B cell (primary cell): ENCODE measurements at regions of chr2 and their contacts with region 1.

Region 1: GRCh38 chr2:226791487-226792081 is 8.0 kb downstream of the IRS1 start:
- DNase-seq: peak; percentile 95
- ATAC-seq: peak; percentile 98
- H3K4me3 ChIP-seq: peak overlapping the region; percentile 51 to 85 (median 75)
- H3K4me3 Mint-ChIP-seq: peak overlapping the region; percentile 97
- H3K27ac ChIP-seq: peak overlapping the region; percentile 92
- H3K27ac Mint-ChIP-seq: peak overlapping the region; percentile 99
- H3K4me1 ChIP-seq: peaks cover 12 to 18% of the 10 kb centered on the region in 2 donors
- H3K4me1 Mint-ChIP-seq: peaks cover 36% of the 10 kb centered on the region
- H3K27me3 ChIP-seq: no peaks in the 10 kb centered on the region
- H3K27me3 Mint-ChIP-seq: no peaks in the 10 kb centered on the region
- CTCF ChIP-seq: peak; percentile 67

Region 2: DNA sequence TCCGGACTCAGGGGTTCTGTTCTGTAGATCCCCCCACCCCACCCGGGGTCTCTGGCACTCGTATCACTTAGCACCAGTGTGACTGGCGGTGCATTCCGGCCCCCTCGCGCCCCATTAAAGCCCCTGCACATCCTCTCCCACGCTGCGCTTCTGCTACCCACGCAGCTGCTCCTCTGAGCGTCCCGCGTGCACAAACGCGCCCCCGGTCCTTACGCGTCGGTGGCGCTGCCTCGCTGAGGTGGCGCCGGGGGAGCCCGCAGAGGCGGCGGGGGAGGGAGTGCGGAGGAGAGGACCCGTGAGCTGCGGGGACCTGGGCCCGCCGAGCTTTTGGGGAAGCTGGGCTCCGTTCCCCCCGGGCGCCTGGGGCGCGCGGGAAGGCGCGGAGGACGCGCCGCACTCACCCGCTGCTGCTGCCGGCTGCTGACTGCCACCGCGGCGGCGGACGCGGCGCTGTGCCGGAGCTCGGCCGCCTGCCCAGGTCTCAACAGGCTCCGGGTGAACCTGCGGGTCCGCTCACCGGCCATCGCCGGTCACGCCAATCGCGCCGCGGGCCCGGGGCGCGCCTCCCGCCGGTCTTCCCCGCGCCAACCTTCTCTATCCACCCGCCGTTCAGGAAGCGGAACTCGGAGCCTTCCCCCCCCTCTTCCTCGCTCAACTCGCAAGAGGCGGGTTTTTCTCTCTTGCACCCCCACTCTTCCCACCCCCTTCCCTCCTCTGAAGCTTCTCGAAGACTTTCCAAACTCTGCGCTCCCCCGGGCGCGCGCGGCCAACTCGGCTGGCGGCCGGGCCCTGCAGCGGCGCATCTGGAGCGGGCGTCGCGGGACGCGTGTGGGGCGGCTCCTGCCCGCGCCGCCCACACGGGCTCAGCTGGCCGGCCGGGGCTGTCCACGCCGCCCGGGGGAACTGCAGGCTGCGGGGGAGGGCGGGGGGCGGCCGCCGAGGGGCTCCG is 1749.5 kb before region 1 on chr2 and contains the start of gene DOCK10:
- CTCF ChIA-PET with region 1: no interaction called
- POLR2A ChIA-PET with region 1: no interaction called
- intact Hi-C with region 1: loop called (anchors 5 kb)
- DNase-seq: peak; percentile 83
- ATAC-seq: peak; percentile 44
- H3K4me3 ChIP-seq: peak within 1 kb of the TSS; percentile 58 to 95 (median 81)
- H3K4me3 Mint-ChIP-seq: peak within 1 kb of the TSS; percentile 95
- H3K27ac ChIP-seq: peak within 1 kb of the TSS; percentile 87 to 91
- H3K27ac Mint-ChIP-seq: peak within 1 kb of the TSS; percentile 97
- H3K4me1 ChIP-seq: peaks cover 26 to 29% of the 10 kb centered on the region in 2 donors
- H3K4me1 Mint-ChIP-seq: peaks cover 48% of the 10 kb centered on the region
- H3K27me3 ChIP-seq: peaks cover 0 to 5% (median 1%) of the 10 kb centered on the region in 4 experiments
- H3K27me3 Mint-ChIP-seq: peaks cover 8% of the 10 kb centered on the region
- CTCF ChIP-seq: no peak
- total RNA-seq, gene DOCK10: 139 and 140 TPM in 2 replicates

Region 3: DNA sequence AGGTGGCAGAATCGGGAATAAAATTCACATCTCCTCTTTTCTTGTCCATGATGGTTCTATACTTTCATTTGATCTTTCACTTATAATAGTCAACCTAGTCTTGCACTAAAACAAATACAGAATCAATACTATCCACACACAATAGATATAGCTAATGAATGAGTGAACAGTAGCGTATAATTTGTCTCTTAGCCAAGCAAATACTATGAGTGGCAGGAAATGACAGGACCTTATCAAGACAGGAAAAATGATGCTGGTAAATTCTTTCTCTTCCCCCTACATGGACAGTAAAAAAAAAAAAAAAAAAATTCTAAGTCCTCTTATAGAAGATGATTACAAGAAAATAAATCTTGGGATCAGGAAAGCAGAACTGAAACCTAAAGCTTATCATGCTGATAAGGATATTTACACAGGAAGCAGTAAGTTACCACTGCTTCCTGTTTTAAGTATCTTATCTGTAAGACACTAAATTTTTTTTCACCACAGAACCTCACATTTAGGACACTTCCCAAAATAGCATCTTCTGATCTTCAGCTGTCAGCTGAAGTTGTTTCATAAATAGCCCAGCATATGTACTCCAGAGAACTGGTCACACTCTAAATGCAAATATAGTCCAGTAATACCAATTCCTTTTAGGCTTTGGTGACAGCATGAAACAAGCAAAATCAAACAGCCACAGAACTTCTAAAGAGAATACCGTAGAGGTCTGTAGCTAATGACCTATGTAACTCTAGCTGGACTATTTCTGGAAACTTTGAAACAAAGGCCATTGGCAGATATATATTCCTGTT is 19.0 kb before region 1 on chr2:
- CTCF ChIA-PET with region 1: interaction called, 6 read pairs
- POLR2A ChIA-PET with region 1: interaction called, 3 read pairs
- intact Hi-C with region 1: loop called (anchors 1 kb)
- DNase-seq: peak; percentile 78
- ATAC-seq: peak; percentile 82
- H3K4me3 ChIP-seq: peak overlapping the region in 1 of 5 experiments; percentile 16
- H3K4me3 Mint-ChIP-seq: peak overlapping the region; percentile 64
- H3K27ac ChIP-seq: peak overlapping the region; percentile 4 to 53
- H3K27ac Mint-ChIP-seq: peak overlapping the region; percentile 71
- H3K4me1 ChIP-seq: peaks cover 26 to 31% of the 10 kb centered on the region in 2 donors
- H3K4me1 Mint-ChIP-seq: peaks cover 50% of the 10 kb centered on the region
- H3K27me3 ChIP-seq: no peaks in the 10 kb centered on the region
- H3K27me3 Mint-ChIP-seq: no peaks in the 10 kb centered on the region
- CTCF ChIP-seq: no peak

Region 4: GRCh38 chr2:226943862-226944620 is 152.5 kb after region 1 on chr2:
- CTCF ChIA-PET with region 1: no interaction called
- POLR2A ChIA-PET with region 1: no interaction called
- intact Hi-C with region 1: no loop called
- DNase-seq: peak; percentile 31
- ATAC-seq: peak; percentile 47
- H3K4me3 ChIP-seq: no peak overlapping the region
- H3K4me3 Mint-ChIP-seq: no peak overlapping the region
- H3K27ac ChIP-seq: peak overlapping the region; percentile 2 to 67
- H3K27ac Mint-ChIP-seq: peak overlapping the region; percentile 83
- H3K4me1 ChIP-seq: peaks cover 11 to 12% of the 10 kb centered on the region in 2 donors
- H3K4me1 Mint-ChIP-seq: peaks cover 17% of the 10 kb centered on the region
- H3K27me3 ChIP-seq: no peaks in the 10 kb centered on the region
- H3K27me3 Mint-ChIP-seq: no peaks in the 10 kb centered on the region
- CTCF ChIP-seq: no peak

Region 5: GRCh38 chr2:226984750-226985582 is 193.4 kb after region 1 on chr2:
- CTCF ChIA-PET with region 1: interaction called, 5 read pairs
- POLR2A ChIA-PET with region 1: no interaction called
- intact Hi-C with region 1: loop called (anchors 1 kb)
- DNase-seq: peak; percentile 72
- ATAC-seq: peak; percentile 88
- H3K4me3 ChIP-seq: no peak overlapping the region
- H3K4me3 Mint-ChIP-seq: no peak overlapping the region
- H3K27ac ChIP-seq: peak overlapping the region; percentile 50 to 80
- H3K27ac Mint-ChIP-seq: peak overlapping the region; percentile 86
- H3K4me1 ChIP-seq: peaks cover 18 to 20% of the 10 kb centered on the region in 2 donors
- H3K4me1 Mint-ChIP-seq: peaks cover 26% of the 10 kb centered on the region
- H3K27me3 ChIP-seq: no peaks in the 10 kb centered on the region
- H3K27me3 Mint-ChIP-seq: no peaks in the 10 kb centered on the region
- CTCF ChIP-seq: peak; percentile 90